Esophagus muscularis mucosa (tissue), 4 donors: ENCODE measurements at regions of chr1 and their contacts with region 1.

Region 1: GRCh38 chr1:211578640-211579433 is at the start of gene SLC30A1:
- DNase-seq: peak; percentile 100
- H3K4me3 ChIP-seq: peak within 1 kb of the TSS; percentile 75 to 97 (median 94)
- H3K27ac ChIP-seq: peak within 1 kb of the TSS; percentile 95 to 99 (median 98)
- H3K4me1 ChIP-seq: peaks cover 21 to 72% (median 68%) of the 10 kb centered on the region in 4 donors
- H3K27me3 ChIP-seq: no peaks in the 10 kb centered on the region
- CTCF ChIP-seq: no peak
- EP300 ChIP-seq: no peak
- POLR2A ChIP-seq: peak; percentile 82
- total RNA-seq, gene SLC30A1: 7.5 to 10.6 (median 10.2) TPM

Region 2: GRCh38 chr1:211613093-211613947 is 34.5 kb after region 1 on chr1:
- intact Hi-C with region 1: loop called (anchors 5 kb)
- DNase-seq: peak; percentile 97
- H3K4me3 ChIP-seq: no peak overlapping the region
- H3K27ac ChIP-seq: peak overlapping the region; percentile 73 to 79 (median 75)
- H3K4me1 ChIP-seq: peaks cover 37 to 52% (median 49%) of the 10 kb centered on the region in 4 donors
- H3K27me3 ChIP-seq: no peaks in the 10 kb centered on the region
- CTCF ChIP-seq: no peak
- EP300 ChIP-seq: no peak
- POLR2A ChIP-seq: no peak

Region 3: GRCh38 chr1:211648980-211649934 is 70.4 kb after region 1 on chr1:
- intact Hi-C with region 1: loop called (anchors 2 kb)
- DNase-seq: no peak
- H3K4me3 ChIP-seq: no peak overlapping the region
- H3K27ac ChIP-seq: no peak overlapping the region
- H3K4me1 ChIP-seq: peaks cover 0 to 12% (median 1%) of the 10 kb centered on the region in 4 donors
- H3K27me3 ChIP-seq: no peaks in the 10 kb centered on the region
- CTCF ChIP-seq: peak in 2 of 3 experiments; percentile 57 to 76
- EP300 ChIP-seq: no peak
- POLR2A ChIP-seq: no peak